Activated CD4-positive, alpha-beta T cell treated with anti-CD3 and anti-CD28 coated beads for 36 hours (primary cell): ENCODE measurements at regions of chr22 and their contacts with region 1.

Region 1: GRCh38 chr22:21587803-21588611 is 20.5 kb downstream of the UBE2L3 start:
- DNase-seq: peak; percentile 79
- ATAC-seq: peak; percentile 97
- H3K4me3 Mint-ChIP-seq: peak overlapping the region; percentile 12
- H3K27ac Mint-ChIP-seq: peak overlapping the region; percentile 88
- H3K4me1 Mint-ChIP-seq: peaks cover 69% of the 10 kb centered on the region
- H3K27me3 Mint-ChIP-seq: no peaks in the 10 kb centered on the region

Region 2: GRCh38 chr22:21567456-21568346 is 20.3 kb before region 1 on chr22 and contains the start of gene UBE2L3:
- CTCF ChIA-PET with region 1: interaction called, 7 read pairs
- POLR2A ChIA-PET with region 1: interaction called, 3 read pairs
- intact Hi-C with region 1: loop called (anchors 1 kb)
- DNase-seq: peak; percentile 93
- ATAC-seq: peak; percentile 68
- H3K4me3 Mint-ChIP-seq: peak within 1 kb of the TSS; percentile 92
- H3K27ac Mint-ChIP-seq: peak within 1 kb of the TSS; percentile 96
- H3K4me1 Mint-ChIP-seq: peaks cover 38% of the 10 kb centered on the region
- H3K27me3 Mint-ChIP-seq: no peaks in the 10 kb centered on the region
- total RNA-seq, gene UBE2L3: 57.3 to 75.5 TPM